ENCODE measurements at regions of chr1 and their contacts with region 1.

Region 1: DNA sequence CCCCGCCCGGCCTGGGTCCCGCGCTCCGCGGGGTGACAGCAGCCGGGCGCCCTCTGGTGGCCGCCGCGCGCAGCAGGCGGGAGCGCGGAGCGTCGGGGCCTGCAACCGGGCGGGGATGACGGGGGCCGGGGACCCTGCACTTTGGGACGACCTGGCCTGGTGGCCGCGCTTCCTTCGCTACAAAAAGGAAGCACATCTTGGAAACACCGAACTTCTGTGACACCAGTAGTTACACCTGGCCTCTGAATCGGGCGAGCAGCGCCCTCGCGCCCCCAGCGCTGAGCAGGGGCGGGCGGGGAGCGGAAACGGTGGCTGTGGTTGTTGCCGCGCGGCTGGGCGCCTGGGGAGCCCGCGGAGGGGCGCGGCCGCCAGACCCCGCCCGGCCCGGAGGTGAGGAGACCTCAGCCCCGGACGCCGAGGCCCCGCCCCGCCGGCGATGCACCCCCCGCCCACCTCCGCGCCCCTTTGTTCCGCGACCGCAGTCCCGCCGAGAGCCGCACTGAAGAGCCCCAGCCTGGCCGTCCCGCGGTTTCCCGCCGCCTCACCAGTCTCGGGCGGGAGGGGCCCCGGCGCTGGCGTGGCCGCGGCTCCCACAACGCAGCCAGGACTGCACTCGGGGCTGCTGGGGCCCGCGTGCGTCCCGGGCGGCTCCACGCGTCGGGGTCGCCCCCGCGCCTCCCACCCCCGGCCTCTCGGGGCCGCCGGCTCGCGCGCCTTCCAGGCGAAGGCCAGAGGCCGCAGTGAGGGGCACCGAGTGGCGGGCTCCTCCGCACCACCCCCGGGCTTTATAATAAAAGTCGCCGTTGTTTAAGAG is 59.3 kb downstream of the H3-3A start:
- DNase-seq: peak; percentile 88
- ATAC-seq: peak; percentile 66
- H3K4me3 Mint-ChIP-seq: peak overlapping the region; percentile 92
- H3K27ac Mint-ChIP-seq: peak overlapping the region; percentile 100
- H3K4me1 Mint-ChIP-seq: peaks cover 79% of the 10 kb centered on the region
- H3K27me3 Mint-ChIP-seq: no peaks in the 10 kb centered on the region
- CTCF ChIP-seq: no peak

Region 2: GRCh38 chr1:225881969-225882693 is 239.7 kb before region 1 on chr1 and contains the start of gene TMEM63A:
- CTCF ChIA-PET with region 1: no interaction called
- POLR2A ChIA-PET with region 1: no interaction called
- intact Hi-C with region 1: no loop called
- DNase-seq: peak; percentile 85
- ATAC-seq: peak; percentile 82
- H3K4me3 Mint-ChIP-seq: peak within 1 kb of the TSS; percentile 87
- H3K27ac Mint-ChIP-seq: peak within 1 kb of the TSS; percentile 84
- H3K4me1 Mint-ChIP-seq: peaks cover 49% of the 10 kb centered on the region
- H3K27me3 Mint-ChIP-seq: no peaks in the 10 kb centered on the region
- CTCF ChIP-seq: no peak
- total RNA-seq, gene TMEM63A: 54.8 and 74.5 TPM in 2 replicates

Region 3: DNA sequence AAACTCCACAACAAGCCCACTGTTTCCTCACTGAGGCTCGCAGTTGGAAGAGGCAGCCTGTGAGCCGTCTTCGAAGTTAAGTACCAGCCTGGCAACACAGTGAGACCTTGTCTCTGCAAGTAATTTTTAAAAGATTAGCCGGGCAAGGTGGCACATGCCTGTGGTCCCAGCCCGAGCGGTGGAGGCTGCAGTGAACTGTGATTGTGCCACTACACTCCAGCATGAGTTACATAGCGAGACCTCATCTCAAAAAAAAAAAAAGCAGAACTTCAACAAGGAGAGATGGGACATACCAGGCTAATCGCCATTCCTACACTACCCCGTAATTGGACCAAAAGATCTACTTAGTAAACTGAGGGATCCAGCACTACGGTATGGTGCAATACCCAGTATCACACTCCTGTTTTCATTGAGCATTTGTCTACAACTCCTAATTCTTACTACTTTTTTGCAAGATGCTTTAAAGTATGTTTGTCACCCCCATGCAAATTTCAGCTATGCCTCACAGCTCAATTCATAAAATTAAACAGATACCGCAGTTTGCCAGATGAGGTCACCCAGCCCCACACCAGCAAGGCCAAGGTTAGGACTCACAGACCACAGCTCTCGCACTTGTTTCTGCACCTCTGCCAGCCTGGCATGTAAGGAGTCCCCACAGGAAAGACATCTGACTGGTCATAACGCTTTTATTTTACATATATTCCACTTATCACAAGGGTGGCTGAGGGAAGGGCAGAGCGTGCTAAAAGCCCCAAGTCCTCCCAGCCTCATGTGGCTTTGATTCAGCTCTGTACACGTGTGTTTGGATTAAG is 143.7 kb before region 1 on chr1:
- CTCF ChIA-PET with region 1: interaction called, 7 read pairs
- POLR2A ChIA-PET with region 1: interaction called, 8 read pairs
- intact Hi-C with region 1: loop called (anchors 1 kb)
- DNase-seq: no peak
- ATAC-seq: peak; percentile 79
- H3K4me3 Mint-ChIP-seq: peak overlapping the region; percentile 63
- H3K27ac Mint-ChIP-seq: peak overlapping the region; percentile 81
- H3K4me1 Mint-ChIP-seq: peaks cover 33% of the 10 kb centered on the region
- H3K27me3 Mint-ChIP-seq: no peaks in the 10 kb centered on the region
- CTCF ChIP-seq: no peak

Region 4: DNA sequence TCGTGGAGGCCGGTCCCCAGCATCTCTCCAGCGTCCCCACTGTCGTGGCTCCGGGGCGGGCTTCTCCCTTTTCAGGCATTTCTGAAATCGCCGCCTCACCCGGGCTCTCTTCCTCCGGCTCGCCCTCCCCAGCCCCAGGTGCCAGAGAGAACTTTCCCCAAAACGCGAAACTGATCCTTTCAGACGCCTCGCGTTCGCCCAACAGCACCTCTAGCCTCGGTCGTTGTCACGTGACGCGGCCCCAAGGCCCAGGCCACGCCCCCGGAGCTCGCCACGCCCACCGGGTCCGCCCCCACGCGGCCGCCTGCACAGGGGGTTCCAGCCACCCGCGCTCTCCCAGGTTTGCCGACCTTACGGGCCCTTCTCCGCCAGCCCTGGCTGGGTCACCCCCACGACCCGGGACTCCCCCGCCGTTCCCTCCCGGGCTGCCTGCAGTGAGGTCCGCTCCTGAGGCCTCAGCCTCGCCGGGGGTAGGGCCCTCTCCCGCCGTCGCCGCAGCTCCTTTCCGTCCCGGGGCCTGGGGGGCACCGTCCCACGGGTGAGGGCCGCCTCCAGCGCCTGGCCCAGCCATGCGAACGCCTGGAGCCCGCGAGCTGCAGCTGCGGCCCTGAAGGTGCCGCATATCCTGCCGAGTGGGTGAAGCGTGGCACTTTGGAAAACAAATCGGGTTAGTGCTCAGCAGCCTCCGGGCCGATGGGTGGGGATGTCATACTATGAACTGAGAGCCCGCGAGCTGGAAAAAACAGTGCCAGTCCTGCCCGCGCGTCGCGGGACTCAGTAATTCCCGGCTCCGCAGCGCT is 38.3 kb before region 1 on chr1:
- CTCF ChIA-PET with region 1: interaction called, 6 read pairs
- POLR2A ChIA-PET with region 1: interaction called, 18 read pairs
- intact Hi-C with region 1: loop called (anchors 1 kb)
- DNase-seq: peak; percentile 99
- ATAC-seq: peak; percentile 91
- H3K4me3 Mint-ChIP-seq: peak overlapping the region; percentile 88
- H3K27ac Mint-ChIP-seq: peak overlapping the region; percentile 68
- H3K4me1 Mint-ChIP-seq: peaks cover 25% of the 10 kb centered on the region
- H3K27me3 Mint-ChIP-seq: no peaks in the 10 kb centered on the region
- CTCF ChIP-seq: no peak

Region 5: GRCh38 chr1:226157761-226158316 is 36.0 kb after region 1 on chr1:
- CTCF ChIA-PET with region 1: interaction called, 26 read pairs
- POLR2A ChIA-PET with region 1: interaction called, 3 read pairs
- intact Hi-C with region 1: loop called (anchors 2 kb)
- DNase-seq: no peak
- ATAC-seq: peak; percentile 80
- H3K4me3 Mint-ChIP-seq: peak overlapping the region; percentile 29
- H3K27ac Mint-ChIP-seq: peak overlapping the region; percentile 89
- H3K4me1 Mint-ChIP-seq: peaks cover 78% of the 10 kb centered on the region
- H3K27me3 Mint-ChIP-seq: no peaks in the 10 kb centered on the region
- CTCF ChIP-seq: no peak

Region 6: DNA sequence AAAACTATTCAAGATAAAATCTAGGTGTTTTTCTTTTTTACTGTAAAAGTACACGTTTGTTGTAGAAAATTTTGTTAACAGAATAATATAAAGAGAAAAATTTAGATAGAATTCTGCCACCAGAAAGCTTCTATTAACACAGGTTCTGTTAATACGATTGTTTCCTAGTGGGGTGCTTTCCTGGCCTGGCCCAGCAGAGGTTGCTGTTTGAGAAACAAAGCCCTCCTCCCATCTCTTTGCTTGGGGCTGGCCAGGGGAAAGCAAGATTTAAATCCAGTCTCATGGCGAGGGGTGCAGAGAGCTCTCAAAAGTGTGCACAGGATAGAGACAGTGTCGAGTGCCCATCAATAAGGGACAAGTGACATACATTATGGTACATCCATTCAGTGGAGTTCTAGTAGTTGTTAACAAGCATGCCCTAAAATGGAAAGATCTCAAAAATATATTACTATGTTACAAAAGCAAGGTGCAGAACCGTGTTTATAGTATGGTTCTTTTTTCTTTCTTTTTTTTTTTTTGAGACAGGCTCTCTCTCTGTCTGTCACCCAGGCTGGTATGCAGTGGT is 79.3 kb after region 1 on chr1:
- CTCF ChIA-PET with region 1: interaction called, 209 read pairs
- POLR2A ChIA-PET with region 1: interaction called, 26 read pairs
- intact Hi-C with region 1: loop called (anchors 1 kb)
- DNase-seq: no peak
- ATAC-seq: no peak
- H3K4me3 Mint-ChIP-seq: no peak overlapping the region
- H3K27ac Mint-ChIP-seq: no peak overlapping the region
- H3K4me1 Mint-ChIP-seq: peaks cover 27% of the 10 kb centered on the region
- H3K27me3 Mint-ChIP-seq: peaks cover 2% of the 10 kb centered on the region
- CTCF ChIP-seq: no peak

Region 7: GRCh38 chr1:226407497-226408284 is 285.9 kb after region 1 on chr1 and contains the start of gene PARP1:
- CTCF ChIA-PET with region 1: interaction called, 22 read pairs
- POLR2A ChIA-PET with region 1: interaction called, 6 read pairs
- intact Hi-C with region 1: loop called (anchors 1 kb)
- DNase-seq: peak; percentile 95
- ATAC-seq: peak; percentile 83
- H3K4me3 Mint-ChIP-seq: peak within 1 kb of the TSS; percentile 98
- H3K27ac Mint-ChIP-seq: peak within 1 kb of the TSS; percentile 96
- H3K4me1 Mint-ChIP-seq: peaks cover 57% of the 10 kb centered on the region
- H3K27me3 Mint-ChIP-seq: no peaks in the 10 kb centered on the region
- CTCF ChIP-seq: peak; percentile 41
- total RNA-seq, gene PARP1: 232 and 260 TPM in 2 replicates

Measured in activated B cell treated with CpG ODN at 0.5 μM for 24 hours (primary cell).